ENCODE measurements at regions of chr19 and their contacts with region 1.

Region 1: GRCh38 chr19:38929929-38930775 is at the start of gene SARS2:
- DNase-seq: peak; percentile 89
- ATAC-seq: peak; percentile 46
- H3K4me3 ChIP-seq: peak within 1 kb of the TSS; percentile 77 to 84 (median 81)
- H3K27ac ChIP-seq: peak within 1 kb of the TSS; percentile 91
- H3K4me1 ChIP-seq: peaks cover 50% of the 10 kb centered on the region
- H3K27me3 ChIP-seq: no peaks in the 10 kb centered on the region
- CTCF ChIP-seq: peak; percentile 99
- EP300 ChIP-seq: 0 out of 4 replicates have a peak, but pooled peaks of 1 of the 2 experiments have one; percentile 39
- POLR2A ChIP-seq: peak in 1 of 2 experiments; percentile 97; a peak in 3 of 4 replicates
- RAD21 ChIP-seq: peak; percentile 84
- total RNA-seq, gene SARS2: 30.1 and 48.6 TPM in 2 replicates

Region 2: DNA sequence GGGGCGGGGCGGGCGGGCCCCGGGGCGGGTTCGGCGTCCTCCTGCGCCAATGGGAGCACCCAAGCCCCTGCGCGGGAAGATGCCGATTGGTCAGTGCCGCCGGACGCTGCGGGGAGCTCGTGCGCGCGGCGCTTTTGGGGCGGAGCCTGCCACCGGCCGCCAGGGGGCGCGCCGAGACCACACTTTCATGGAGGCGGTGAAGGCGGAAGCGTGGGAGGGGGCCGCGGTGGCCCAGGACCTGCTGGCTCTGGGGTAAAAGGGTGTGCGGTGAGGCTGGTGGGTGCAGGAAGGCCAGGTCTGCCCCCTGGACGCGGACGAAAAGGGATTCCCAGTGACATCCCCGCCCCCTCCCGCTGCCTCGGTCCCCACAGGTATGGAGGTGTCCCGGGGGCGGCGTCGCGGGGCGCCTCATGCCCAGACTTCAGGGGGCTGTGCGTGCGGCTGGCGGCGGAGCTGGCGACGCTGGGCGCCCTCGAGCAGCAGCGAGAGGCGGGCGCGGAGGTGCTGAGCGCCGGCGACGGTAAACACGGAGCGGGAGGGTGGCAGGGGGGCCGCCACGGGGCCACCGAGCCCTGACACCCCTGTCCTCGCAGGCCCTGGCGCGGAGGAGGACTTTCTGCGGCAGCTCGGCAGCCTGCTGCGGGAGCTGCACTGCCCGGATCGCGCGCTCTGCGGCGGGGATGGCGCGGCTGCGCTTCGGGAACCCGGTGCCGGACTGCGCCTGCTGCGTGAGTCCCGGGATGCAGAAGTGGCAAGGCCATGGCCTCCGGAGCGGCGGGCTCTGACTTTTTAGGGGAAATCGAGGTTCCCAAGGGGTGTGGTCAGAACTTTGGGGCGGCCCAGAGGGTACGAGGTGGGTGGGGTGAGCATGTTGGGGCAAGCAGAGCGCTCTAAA is 526.9 kb before region 1 on chr19 and contains the start of gene FAM98C:
- CTCF ChIA-PET with region 1: no interaction called
- POLR2A ChIA-PET with region 1: interaction called, 12 read pairs
- in situ Hi-C with region 1: no loop called
- intact Hi-C with region 1: no loop called
- DNase-seq: peak; percentile 93
- ATAC-seq: peak; percentile 96
- H3K4me3 ChIP-seq: peak within 1 kb of the TSS; percentile 57 to 86 (median 80); a peak in 5 of 6 replicates
- H3K27ac ChIP-seq: peak within 1 kb of the TSS; percentile 55
- H3K4me1 ChIP-seq: no peaks in the 10 kb centered on the region
- H3K27me3 ChIP-seq: peaks cover 5 to 17% of the 10 kb centered on the region in 2 experiments; a peak in 3 of 5 replicates
- CTCF ChIP-seq: peak; percentile 97
- EP300 ChIP-seq: no peak
- POLR2A ChIP-seq: peak; percentile 58 to 62; a peak in 3 of 4 replicates
- RAD21 ChIP-seq: peak; percentile 94
- total RNA-seq, gene FAM98C: 7.4 and 10.0 TPM in 2 replicates

Region 3: DNA sequence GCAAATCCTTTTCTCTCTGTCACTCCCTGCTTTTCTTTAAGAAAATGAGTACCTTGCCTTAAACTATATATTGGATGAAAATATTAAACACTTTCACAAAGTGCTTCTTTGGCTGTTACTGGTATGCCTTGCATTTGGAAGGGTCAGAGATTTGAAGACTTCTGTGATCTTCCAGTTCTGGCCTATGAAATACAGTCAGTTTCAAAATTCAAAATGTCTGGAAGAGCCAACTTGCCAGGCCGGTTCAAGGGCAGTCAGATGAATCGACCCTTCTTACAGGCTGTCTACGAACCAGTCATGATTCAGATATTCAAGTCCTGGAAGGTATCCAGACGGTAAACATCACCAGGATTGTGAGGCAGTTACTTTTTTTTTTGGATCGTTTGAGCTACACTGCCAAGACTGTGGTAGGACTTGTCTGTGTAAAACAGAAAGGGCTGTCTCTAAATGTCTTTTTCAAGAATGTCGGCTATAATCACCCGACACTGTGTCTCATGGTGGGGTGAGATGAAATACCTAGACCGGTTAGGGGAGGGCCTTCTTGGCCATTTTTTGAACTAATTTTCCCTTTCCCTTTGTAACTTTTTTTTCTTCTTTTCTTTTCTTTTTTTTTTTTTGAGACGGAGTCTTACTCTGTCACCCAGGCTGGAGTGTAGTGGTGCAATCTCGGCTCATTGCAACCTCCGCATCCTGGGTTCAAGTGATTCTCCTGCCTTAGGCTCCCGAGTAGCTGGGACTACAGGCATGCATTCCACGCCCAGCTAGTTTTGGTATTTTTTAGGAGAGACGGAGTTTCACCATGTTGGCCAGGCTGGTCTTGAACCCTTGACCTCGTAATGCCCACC is 271.5 kb before region 1 on chr19:
- CTCF ChIA-PET with region 1: no interaction called
- POLR2A ChIA-PET with region 1: interaction called, 3 read pairs
- in situ Hi-C with region 1: no loop called
- intact Hi-C with region 1: loop called (anchors 5 kb)
- DNase-seq: peak; percentile 95
- ATAC-seq: peak; percentile 80
- H3K4me3 ChIP-seq: no peak overlapping the region; a peak in 1 of 6 replicates
- H3K27ac ChIP-seq: peak overlapping the region; percentile 69
- H3K4me1 ChIP-seq: peaks cover 98% of the 10 kb centered on the region
- H3K27me3 ChIP-seq: no peaks in the 10 kb centered on the region
- CTCF ChIP-seq: no peak
- EP300 ChIP-seq: peak; percentile 36 to 62; a peak in 1 of 4 replicates
- POLR2A ChIP-seq: peak in 1 of 2 experiments; percentile 51; a peak in 2 of 4 replicates
- RAD21 ChIP-seq: no peak

Region 4: DNA sequence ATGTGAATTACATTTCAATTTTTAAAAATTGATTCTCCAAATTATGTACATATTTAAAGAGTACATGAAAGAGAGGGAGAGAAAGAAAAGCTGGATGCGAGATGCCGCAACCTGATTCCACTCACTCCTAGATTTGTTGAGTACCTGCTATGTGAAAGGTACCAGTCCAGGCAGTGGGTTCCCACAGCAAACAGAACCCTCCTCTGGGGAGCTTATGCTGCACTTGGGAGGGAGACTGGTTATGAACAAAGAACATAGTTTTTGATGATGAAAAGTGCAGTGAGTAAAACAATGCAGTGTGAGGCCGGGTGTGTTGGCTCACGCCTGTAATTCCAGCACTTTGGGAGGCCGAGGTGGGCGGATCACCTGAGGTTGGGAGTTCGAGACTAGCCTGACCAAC is 239.3 kb before region 1 on chr19:
- CTCF ChIA-PET with region 1: no interaction called
- POLR2A ChIA-PET with region 1: no interaction called
- in situ Hi-C with region 1: no loop called
- intact Hi-C with region 1: no loop called
- DNase-seq: no peak
- ATAC-seq: no peak
- H3K4me3 ChIP-seq: no peak overlapping the region
- H3K27ac ChIP-seq: no peak overlapping the region
- H3K4me1 ChIP-seq: peaks cover 100% of the 10 kb centered on the region
- H3K27me3 ChIP-seq: no peaks in the 10 kb centered on the region
- CTCF ChIP-seq: no peak
- EP300 ChIP-seq: no peak
- POLR2A ChIP-seq: no peak
- RAD21 ChIP-seq: no peak

Region 5: GRCh38 chr19:38849860-38850435 is 80.2 kb before region 1 on chr19 and contains the start of gene HNRNPL:
- CTCF ChIA-PET with region 1: no interaction called
- POLR2A ChIA-PET with region 1: interaction called, 14 read pairs
- in situ Hi-C with region 1: no loop called
- intact Hi-C with region 1: no loop called
- DNase-seq: peak; percentile 100
- ATAC-seq: peak; percentile 75
- H3K4me3 ChIP-seq: peak within 1 kb of the TSS; percentile 67 to 87 (median 72)
- H3K27ac ChIP-seq: peak within 1 kb of the TSS; percentile 96
- H3K4me1 ChIP-seq: peaks cover 64% of the 10 kb centered on the region
- H3K27me3 ChIP-seq: no peaks in the 10 kb centered on the region; a peak in 1 of 5 replicates
- CTCF ChIP-seq: peak; percentile 69
- EP300 ChIP-seq: no peak
- POLR2A ChIP-seq: peak; percentile 67 to 80; a peak in 3 of 4 replicates
- RAD21 ChIP-seq: peak; percentile 3; the same call in 1 of the 2 replicates
- total RNA-seq, gene HNRNPL: 270 and 278 TPM in 2 replicates

Region 6: GRCh38 chr19:38891771-38892170 is 38.4 kb before region 1 on chr19:
- CTCF ChIA-PET with region 1: no interaction called
- POLR2A ChIA-PET with region 1: no interaction called
- in situ Hi-C with region 1: no loop called
- intact Hi-C with region 1: no loop called
- DNase-seq: no peak
- ATAC-seq: no peak
- H3K4me3 ChIP-seq: no peak overlapping the region
- H3K27ac ChIP-seq: no peak overlapping the region
- H3K4me1 ChIP-seq: no peaks in the 10 kb centered on the region
- H3K27me3 ChIP-seq: no peaks in the 10 kb centered on the region
- CTCF ChIP-seq: no peak
- EP300 ChIP-seq: no peak
- POLR2A ChIP-seq: no peak
- RAD21 ChIP-seq: no peak

Region 7: GRCh38 chr19:38952395-38953165 is 22.4 kb after region 1 on chr19:
- CTCF ChIA-PET with region 1: interaction called, 3 read pairs
- POLR2A ChIA-PET with region 1: interaction called, 10 read pairs
- in situ Hi-C with region 1: no loop called
- intact Hi-C with region 1: no loop called
- DNase-seq: peak; percentile 51
- ATAC-seq: peak; percentile 66
- H3K4me3 ChIP-seq: no peak overlapping the region
- H3K27ac ChIP-seq: no peak overlapping the region
- H3K4me1 ChIP-seq: peaks cover 24% of the 10 kb centered on the region
- H3K27me3 ChIP-seq: no peaks in the 10 kb centered on the region
- CTCF ChIP-seq: peak; percentile 69
- EP300 ChIP-seq: no peak
- POLR2A ChIP-seq: no peak
- RAD21 ChIP-seq: no peak

Region 8: GRCh38 chr19:39057615-39058014 is 127.5 kb after region 1 on chr19:
- CTCF ChIA-PET with region 1: no interaction called
- POLR2A ChIA-PET with region 1: no interaction called
- in situ Hi-C with region 1: no loop called
- intact Hi-C with region 1: no loop called
- DNase-seq: no peak
- ATAC-seq: no peak
- H3K4me3 ChIP-seq: no peak overlapping the region
- H3K27ac ChIP-seq: no peak overlapping the region
- H3K4me1 ChIP-seq: peaks cover 34% of the 10 kb centered on the region
- H3K27me3 ChIP-seq: no peaks in the 10 kb centered on the region
- CTCF ChIP-seq: no peak
- EP300 ChIP-seq: no peak
- POLR2A ChIP-seq: no peak
- RAD21 ChIP-seq: no peak

Region 9: DNA sequence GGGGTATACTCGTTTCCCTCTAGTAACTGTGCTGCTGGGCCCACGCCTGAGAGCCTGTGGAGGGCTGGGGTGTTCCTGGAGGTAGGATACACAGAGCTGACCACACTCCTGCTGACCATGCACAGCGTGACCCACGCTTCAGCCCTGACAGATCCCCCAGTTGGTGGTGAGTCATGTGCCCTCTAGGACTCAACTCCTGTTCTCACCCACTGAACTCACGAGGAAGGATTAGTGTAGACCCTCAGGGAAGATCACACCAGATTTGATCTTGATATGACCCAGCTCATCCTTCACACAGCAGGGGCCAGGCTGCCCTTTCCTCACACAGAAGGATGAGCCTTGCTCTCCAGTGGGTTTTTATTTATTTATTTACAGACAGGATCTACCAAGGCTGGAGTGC is 140.7 kb after region 1 on chr19:
- CTCF ChIA-PET with region 1: no interaction called
- POLR2A ChIA-PET with region 1: no interaction called
- in situ Hi-C with region 1: no loop called
- intact Hi-C with region 1: no loop called
- DNase-seq: no peak
- ATAC-seq: peak; percentile 38; the same call in 1 of the 3 replicates
- H3K4me3 ChIP-seq: no peak overlapping the region
- H3K27ac ChIP-seq: no peak overlapping the region
- H3K4me1 ChIP-seq: peaks cover 30% of the 10 kb centered on the region
- H3K27me3 ChIP-seq: peaks cover 0 to 2% of the 10 kb centered on the region in 2 experiments; a peak in 1 of 5 replicates
- CTCF ChIP-seq: no peak
- EP300 ChIP-seq: no peak
- POLR2A ChIP-seq: no peak
- RAD21 ChIP-seq: no peak

Measured in HepG2 (cell line).